ENCODE measurements at regions of chr21 and their contacts with region 1.

Region 1: GRCh38 chr21:29477941-29478340 is 179.2 kb downstream of the BACH1 start:
- DNase-seq: peak; percentile 71
- ATAC-seq: peak; percentile 13; the same call in 1 of the 2 replicates
- H3K4me3 ChIP-seq: no peak overlapping the region
- H3K27ac ChIP-seq: no peak overlapping the region
- H3K4me1 ChIP-seq: peaks cover 19% of the 10 kb centered on the region
- H3K27me3 ChIP-seq: no peaks in the 10 kb centered on the region
- CTCF ChIP-seq: no peak
- POLR2A ChIP-seq: no peak
- RAD21 ChIP-seq: no peak

Region 2: DNA sequence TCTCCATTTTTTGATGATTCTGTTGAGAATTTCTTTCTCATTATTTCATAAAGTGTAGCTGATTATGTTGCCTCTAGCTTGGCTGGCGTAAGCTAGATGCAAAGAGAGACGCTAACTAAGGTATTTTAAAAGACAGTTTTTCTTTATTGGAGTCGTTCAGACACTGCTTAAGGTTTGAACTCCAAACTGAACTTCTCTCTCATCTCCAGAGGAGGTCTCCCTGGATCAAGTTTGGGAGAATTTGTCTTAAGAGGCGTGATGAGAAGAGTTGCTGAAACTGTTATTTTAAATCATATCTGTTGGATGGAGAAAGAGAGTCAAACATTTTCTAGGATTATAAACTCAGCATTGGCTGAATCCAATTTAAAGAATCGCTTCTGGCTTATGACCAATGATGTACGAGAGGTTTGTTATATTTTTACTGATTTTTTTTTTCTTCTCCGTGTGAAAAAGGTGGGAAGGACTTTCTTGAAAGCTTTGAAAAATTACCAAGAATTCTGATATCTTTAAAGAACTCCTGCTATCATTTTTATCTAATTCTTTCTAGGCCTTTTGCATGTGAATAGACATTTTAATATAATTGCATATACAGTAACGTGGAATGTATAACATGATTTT is 313.5 kb before region 1 on chr21:
- CTCF ChIA-PET with region 1: no interaction called
- POLR2A ChIA-PET with region 1: no interaction called
- dilution Hi-C with region 1: no loop called
- in situ Hi-C with region 1: no loop called
- intact Hi-C with region 1: loop called (anchors 10 kb)
- DNase-seq: peak; percentile 91
- ATAC-seq: peak; percentile 79
- H3K4me3 ChIP-seq: no peak overlapping the region
- H3K27ac ChIP-seq: no peak overlapping the region
- H3K4me1 ChIP-seq: peaks cover 5% of the 10 kb centered on the region; the same call in 1 of the 2 replicates
- H3K27me3 ChIP-seq: no peaks in the 10 kb centered on the region
- CTCF ChIP-seq: peak; percentile 90
- POLR2A ChIP-seq: 0 out of 2 replicates have a peak, but pooled peaks have one; percentile 34
- RAD21 ChIP-seq: peak; percentile 97

Region 3: DNA sequence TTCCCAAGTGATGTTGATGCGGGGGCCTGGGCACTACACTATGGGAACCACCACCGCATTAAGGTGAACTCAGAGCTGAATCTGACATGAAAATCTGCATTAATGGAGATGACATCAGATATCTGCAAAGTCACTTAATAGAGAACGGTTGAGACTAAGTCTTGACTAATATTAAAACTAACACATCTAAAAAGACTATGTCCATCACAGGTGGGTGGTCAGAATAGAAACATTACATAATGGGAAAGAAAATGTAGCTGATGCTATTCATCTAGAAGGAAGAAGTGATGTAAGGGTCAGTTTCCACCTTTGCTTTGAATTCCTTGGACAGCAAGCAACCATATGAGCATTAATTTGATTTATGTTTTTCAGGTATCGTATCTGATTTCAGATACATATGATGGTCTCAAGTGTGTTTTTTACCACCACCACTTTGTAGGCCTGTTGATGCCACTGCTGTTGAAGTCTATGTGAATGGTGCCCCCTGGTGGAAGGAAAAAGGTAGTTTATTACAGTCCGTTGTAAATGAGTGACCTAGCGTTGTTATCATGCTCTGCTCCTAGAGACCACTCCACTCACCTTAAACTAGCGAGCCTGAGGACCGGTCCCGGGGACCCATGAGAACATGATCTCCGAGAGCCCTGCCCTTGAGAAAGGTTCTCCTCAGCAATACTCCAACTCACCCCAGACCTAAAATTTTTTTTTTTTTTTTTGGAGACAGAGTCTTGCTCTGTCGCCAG is 105.7 kb before region 1 on chr21:
- CTCF ChIA-PET with region 1: no interaction called
- POLR2A ChIA-PET with region 1: no interaction called
- dilution Hi-C with region 1: no loop called
- in situ Hi-C with region 1: no loop called
- intact Hi-C with region 1: loop called (anchors 5 kb)
- DNase-seq: peak; percentile 84
- ATAC-seq: peak; percentile 94
- H3K4me3 ChIP-seq: no peak overlapping the region
- H3K27ac ChIP-seq: no peak overlapping the region
- H3K4me1 ChIP-seq: peaks cover 2% of the 10 kb centered on the region; the same call in 1 of the 2 replicates
- H3K27me3 ChIP-seq: no peaks in the 10 kb centered on the region
- CTCF ChIP-seq: peak; percentile 82
- POLR2A ChIP-seq: no peak
- RAD21 ChIP-seq: peak; percentile 93

Region 4: GRCh38 chr21:29499734-29500343 is 21.9 kb after region 1 on chr21:
- CTCF ChIA-PET with region 1: no interaction called
- POLR2A ChIA-PET with region 1: no interaction called
- dilution Hi-C with region 1: no loop called
- in situ Hi-C with region 1: no loop called
- intact Hi-C with region 1: loop called (anchors 1 kb)
- DNase-seq: no peak
- ATAC-seq: no peak
- H3K4me3 ChIP-seq: no peak overlapping the region
- H3K27ac ChIP-seq: no peak overlapping the region
- H3K4me1 ChIP-seq: peaks cover 5% of the 10 kb centered on the region; the same call in 1 of the 2 replicates
- H3K27me3 ChIP-seq: no peaks in the 10 kb centered on the region
- CTCF ChIP-seq: peak; percentile 59
- POLR2A ChIP-seq: no peak
- RAD21 ChIP-seq: peak; percentile 51

Region 5: DNA sequence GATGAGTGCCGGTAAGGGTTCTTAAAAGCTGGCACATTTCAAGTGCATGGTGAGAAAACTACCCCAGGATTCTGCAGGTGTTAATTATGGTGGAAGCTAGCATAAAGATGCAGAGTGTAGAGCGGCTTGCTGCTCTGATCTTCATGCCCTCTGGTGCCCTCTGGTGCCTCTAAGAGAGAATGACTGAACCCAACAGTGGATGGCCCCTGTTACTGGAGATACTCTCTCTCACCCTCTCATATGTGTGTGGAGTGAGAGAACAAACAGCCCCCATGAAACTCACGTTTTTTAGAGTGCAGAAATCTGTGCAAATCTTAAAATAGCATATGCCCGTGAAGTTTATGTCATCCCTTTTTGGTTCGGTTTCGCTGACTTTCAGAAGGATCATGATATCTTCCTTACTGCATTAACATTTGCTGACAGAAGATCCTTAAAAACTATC is 371.8 kb after region 1 on chr21:
- CTCF ChIA-PET with region 1: interaction called, 6 read pairs
- POLR2A ChIA-PET with region 1: no interaction called
- dilution Hi-C with region 1: no loop called
- in situ Hi-C with region 1: loop called (anchors 5 kb)
- intact Hi-C with region 1: loop called (anchors 1 kb)
- DNase-seq: peak; percentile 57
- ATAC-seq: peak; percentile 100
- H3K4me3 ChIP-seq: no peak overlapping the region
- H3K27ac ChIP-seq: no peak overlapping the region
- H3K4me1 ChIP-seq: no peaks in the 10 kb centered on the region
- H3K27me3 ChIP-seq: no peaks in the 10 kb centered on the region; the same call in none of the 2 replicates
- CTCF ChIP-seq: peak; percentile 78
- POLR2A ChIP-seq: 0 out of 2 replicates have a peak, but pooled peaks have one; percentile 22
- RAD21 ChIP-seq: peak; percentile 88

Region 6: DNA sequence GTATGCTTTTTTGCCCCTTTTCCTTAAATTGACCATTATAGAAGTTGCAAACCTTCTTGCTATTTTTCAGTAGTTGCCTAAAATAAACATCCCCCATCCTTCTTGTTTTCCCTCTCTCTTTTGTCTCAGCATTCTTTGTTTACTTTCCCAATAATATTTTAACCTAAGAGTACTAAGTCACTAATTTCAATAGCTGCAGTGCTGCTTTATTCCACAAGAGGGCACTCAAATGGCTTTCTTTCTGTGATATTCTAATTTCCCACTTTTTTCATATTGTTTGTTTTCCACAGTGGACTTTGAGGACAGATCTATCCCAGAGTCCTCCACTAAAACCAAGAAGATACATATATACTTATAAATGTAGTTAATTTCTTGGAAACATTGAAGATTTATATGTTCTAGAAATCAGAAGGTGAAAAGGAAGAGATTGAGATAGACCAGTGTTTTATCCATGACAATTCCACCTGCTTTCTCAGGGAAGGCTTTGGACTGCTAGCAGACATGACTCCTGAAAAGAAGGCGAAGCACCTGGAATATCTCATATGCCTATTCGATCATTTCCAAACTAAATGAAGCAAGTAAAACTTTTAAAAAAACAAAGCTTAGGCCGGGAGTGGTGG is 566.6 kb after region 1 on chr21:
- CTCF ChIA-PET with region 1: no interaction called
- POLR2A ChIA-PET with region 1: no interaction called
- dilution Hi-C with region 1: no loop called
- in situ Hi-C with region 1: no loop called
- intact Hi-C with region 1: loop called (anchors 1 kb)
- DNase-seq: peak; percentile 7
- ATAC-seq: peak; percentile 21; the same call in 1 of the 2 replicates
- H3K4me3 ChIP-seq: no peak overlapping the region
- H3K27ac ChIP-seq: no peak overlapping the region
- H3K4me1 ChIP-seq: no peaks in the 10 kb centered on the region
- H3K27me3 ChIP-seq: no peaks in the 10 kb centered on the region
- CTCF ChIP-seq: peak; percentile 74
- POLR2A ChIP-seq: no peak
- RAD21 ChIP-seq: peak; percentile 38; the same call in 1 of the 2 replicates